Endothelial cell of umbilical vein (primary cell): ENCODE measurements at regions of chr15 and their contacts with region 1.

Region 1: GRCh38 chr15:57213862-57214261 is 162.4 kb upstream of the CGNL1 start:
- DNase-seq: peak; percentile 76
- H3K4me3 ChIP-seq: no peak overlapping the region
- H3K27ac ChIP-seq: no peak overlapping the region
- H3K4me1 ChIP-seq: peaks cover 17% of the 10 kb centered on the region
- H3K27me3 ChIP-seq: no peaks in the 10 kb centered on the region
- CTCF ChIP-seq: peak; percentile 18 to 24
- POLR2A ChIP-seq: no peak

Region 2: DNA sequence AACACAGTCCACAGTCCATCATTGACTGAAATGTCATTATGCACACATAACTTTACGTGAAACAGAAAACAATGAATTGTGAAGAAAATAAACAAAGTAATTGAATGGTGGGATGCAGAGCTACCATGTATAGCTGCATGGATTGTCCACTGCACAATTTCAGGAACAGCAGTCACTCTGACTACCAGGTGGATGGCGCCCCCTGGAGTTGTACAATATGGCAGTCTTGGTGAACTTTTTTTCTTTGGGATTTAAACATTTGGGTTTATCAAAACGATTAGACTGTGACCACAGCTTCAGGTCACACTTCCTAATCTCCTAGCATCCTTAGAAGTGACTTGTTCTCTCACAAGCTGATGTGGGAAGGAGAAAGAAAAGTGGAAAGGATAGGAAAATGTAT is 344.3 kb before region 1 on chr15:
- CTCF ChIA-PET with region 1: no interaction called
- POLR2A ChIA-PET with region 1: no interaction called
- dilution Hi-C with region 1: no loop called
- intact Hi-C with region 1: no loop called
- DNase-seq: peak; percentile 31
- H3K4me3 ChIP-seq: no peak overlapping the region
- H3K27ac ChIP-seq: no peak overlapping the region
- H3K4me1 ChIP-seq: peaks cover 16% of the 10 kb centered on the region
- H3K27me3 ChIP-seq: no peaks in the 10 kb centered on the region
- CTCF ChIP-seq: peak; percentile 41 to 46
- POLR2A ChIP-seq: no peak

Region 3: GRCh38 chr15:56886932-56887781 is 326.7 kb before region 1 on chr15:
- CTCF ChIA-PET with region 1: no interaction called
- POLR2A ChIA-PET with region 1: no interaction called
- dilution Hi-C with region 1: no loop called
- intact Hi-C with region 1: loop called (anchors 10 kb)
- DNase-seq: peak; percentile 91
- H3K4me3 ChIP-seq: peak overlapping the region; percentile 23 to 79 (median 67)
- H3K27ac ChIP-seq: peak overlapping the region; percentile 73
- H3K4me1 ChIP-seq: peaks cover 15% of the 10 kb centered on the region
- H3K27me3 ChIP-seq: no peaks in the 10 kb centered on the region
- CTCF ChIP-seq: peak in 1 of 2 donors; percentile 4
- POLR2A ChIP-seq: peak; percentile 81

Region 4: DNA sequence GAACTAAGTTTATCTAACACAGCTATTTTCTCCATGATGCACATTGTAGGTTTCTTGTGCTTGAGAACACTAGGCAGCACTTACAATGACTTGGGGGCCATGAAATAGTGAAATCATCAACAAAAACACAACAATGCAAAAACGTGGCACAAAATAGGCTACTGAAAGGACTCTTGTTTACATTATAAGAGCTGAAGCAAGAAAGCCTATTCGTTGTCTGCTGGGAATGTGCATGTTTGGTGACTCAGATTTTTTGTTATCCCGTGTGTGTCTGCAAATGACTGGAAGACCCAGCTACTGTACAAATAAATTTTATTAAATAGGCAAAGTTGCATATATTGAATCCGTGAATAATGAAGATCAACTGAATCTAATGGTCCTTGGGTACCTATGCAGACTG is 210.4 kb before region 1 on chr15:
- CTCF ChIA-PET with region 1: no interaction called
- POLR2A ChIA-PET with region 1: no interaction called
- dilution Hi-C with region 1: no loop called
- intact Hi-C with region 1: no loop called
- DNase-seq: peak; percentile 42
- H3K4me3 ChIP-seq: no peak overlapping the region
- H3K27ac ChIP-seq: no peak overlapping the region
- H3K4me1 ChIP-seq: peaks cover 3% of the 10 kb centered on the region
- H3K27me3 ChIP-seq: no peaks in the 10 kb centered on the region
- CTCF ChIP-seq: no peak
- POLR2A ChIP-seq: no peak

Region 5: DNA sequence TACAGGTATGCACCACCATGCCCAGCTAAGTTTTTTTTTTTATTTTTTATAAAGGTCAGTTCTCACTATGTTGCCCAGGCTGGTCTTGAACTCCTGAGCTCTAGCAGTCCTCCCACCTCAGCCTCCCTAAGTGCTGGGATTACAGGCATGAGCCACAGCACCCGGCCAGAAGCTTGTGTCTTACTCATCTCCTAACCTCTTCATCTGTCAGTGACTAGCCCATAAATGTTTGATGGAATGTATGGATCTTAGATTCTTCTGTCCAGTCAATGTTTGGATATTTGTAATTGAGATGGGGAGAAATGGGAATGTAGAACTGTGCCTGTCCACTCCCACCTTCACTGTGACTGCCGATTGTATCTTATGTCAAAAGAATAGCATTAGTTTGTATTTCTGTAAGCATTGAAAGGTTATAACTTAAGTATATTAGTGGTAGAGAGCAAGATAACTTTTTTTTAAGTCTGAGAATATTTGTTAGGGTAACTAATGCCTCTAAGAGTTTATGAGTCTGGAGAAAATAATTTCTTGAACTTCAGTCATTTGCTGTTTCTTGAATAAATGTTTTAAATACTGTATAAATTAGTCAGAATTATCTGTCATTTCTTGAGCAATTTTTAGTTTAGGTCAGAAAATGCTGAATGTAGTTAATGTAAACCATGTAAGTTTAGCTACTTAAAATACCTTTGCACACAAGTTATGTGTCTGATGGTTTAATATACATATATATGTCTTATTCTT is 52.9 kb before region 1 on chr15:
- CTCF ChIA-PET with region 1: interaction called, 11 read pairs
- POLR2A ChIA-PET with region 1: no interaction called
- dilution Hi-C with region 1: no loop called
- intact Hi-C with region 1: no loop called
- DNase-seq: no peak
- H3K4me3 ChIP-seq: no peak overlapping the region
- H3K27ac ChIP-seq: no peak overlapping the region
- H3K4me1 ChIP-seq: peaks cover 8% of the 10 kb centered on the region
- H3K27me3 ChIP-seq: no peaks in the 10 kb centered on the region
- CTCF ChIP-seq: no peak
- POLR2A ChIP-seq: no peak

Region 6: GRCh38 chr15:57198654-57199291 is 15.1 kb before region 1 on chr15:
- CTCF ChIA-PET with region 1: interaction called, 13 read pairs
- POLR2A ChIA-PET with region 1: no interaction called
- dilution Hi-C with region 1: no loop called
- intact Hi-C with region 1: no loop called
- DNase-seq: peak; percentile 67
- H3K4me3 ChIP-seq: no peak overlapping the region
- H3K27ac ChIP-seq: no peak overlapping the region
- H3K4me1 ChIP-seq: peaks cover 12% of the 10 kb centered on the region
- H3K27me3 ChIP-seq: no peaks in the 10 kb centered on the region
- CTCF ChIP-seq: no peak
- POLR2A ChIP-seq: no peak

Region 7: GRCh38 chr15:57485869-57486268 is 272.0 kb after region 1 on chr15:
- CTCF ChIA-PET with region 1: no interaction called
- POLR2A ChIA-PET with region 1: no interaction called
- dilution Hi-C with region 1: no loop called
- intact Hi-C with region 1: no loop called
- DNase-seq: peak; percentile 82
- H3K4me3 ChIP-seq: no peak overlapping the region
- H3K27ac ChIP-seq: peak overlapping the region; percentile 56
- H3K4me1 ChIP-seq: peaks cover 22% of the 10 kb centered on the region
- H3K27me3 ChIP-seq: no peaks in the 10 kb centered on the region
- CTCF ChIP-seq: no peak
- POLR2A ChIP-seq: no peak